PC-9 (cell line): ENCODE measurements at regions of chrX and their contacts with region 1.

Region 1: DNA sequence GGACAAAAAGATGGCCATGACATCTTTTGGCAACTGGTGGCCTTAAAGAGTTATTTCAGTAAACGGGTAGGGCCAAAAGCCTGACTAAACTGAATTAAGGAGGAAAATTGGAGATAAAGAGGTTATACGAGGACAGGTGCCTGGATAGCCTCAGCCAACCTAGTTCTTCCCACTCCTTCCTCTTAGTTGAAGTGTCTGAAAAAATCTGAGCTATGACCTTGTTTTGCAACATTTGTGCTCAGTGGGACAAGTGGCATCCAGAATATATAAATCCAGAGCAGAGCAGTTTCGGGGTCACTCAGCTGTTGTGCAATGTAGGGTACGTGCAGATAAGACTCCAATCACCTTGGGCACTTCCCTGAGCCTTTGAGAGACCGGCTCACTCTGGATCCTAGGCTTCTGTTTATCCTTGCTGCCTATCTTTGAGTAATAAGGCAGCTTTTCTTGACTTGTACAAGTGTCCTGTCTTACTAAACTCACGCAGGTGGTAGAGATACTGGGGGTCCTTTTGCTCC is 50.2 kb upstream of the MORC4 start:
- DNase-seq: no peak
- H3K4me3 ChIP-seq: no peak overlapping the region
- H3K27ac ChIP-seq: no peak overlapping the region
- H3K4me1 ChIP-seq: no peaks in the 10 kb centered on the region; the same call in 1 of the 2 replicates
- H3K27me3 ChIP-seq: no peaks in the 10 kb centered on the region
- CTCF ChIP-seq: no peak

Region 2: GRCh38 chrX:107076158-107076557 is 25.9 kb after region 1 on chrX:
- CTCF ChIA-PET with region 1: no interaction called
- POLR2A ChIA-PET with region 1: interaction called, 7 read pairs
- intact Hi-C with region 1: loop called (anchors 1 kb)
- DNase-seq: no peak
- H3K4me3 ChIP-seq: no peak overlapping the region
- H3K27ac ChIP-seq: no peak overlapping the region
- H3K4me1 ChIP-seq: no peaks in the 10 kb centered on the region
- H3K27me3 ChIP-seq: no peaks in the 10 kb centered on the region
- CTCF ChIP-seq: no peak